ENCODE measurements at regions of chr7 and their contacts with region 1.

Region 1: GRCh38 chr7:151017953-151018420 is 6.3 kb downstream of the ATG9B start:
- DNase-seq: peak; percentile 69 to 88 (median 79)
- ATAC-seq: peak; percentile 50
- H3K4me3 ChIP-seq: peak overlapping the region; percentile 52
- H3K4me3 Mint-ChIP-seq: peak overlapping the region; percentile 79
- H3K27ac ChIP-seq: peak overlapping the region; percentile 1 to 41
- H3K27ac Mint-ChIP-seq: peak overlapping the region; percentile 83
- H3K4me1 ChIP-seq: peaks cover 66% of the 10 kb centered on the region
- H3K4me1 Mint-ChIP-seq: peaks cover 61% of the 10 kb centered on the region
- H3K27me3 ChIP-seq: peaks cover 4 to 7% of the 10 kb centered on the region in 2 experiments
- H3K27me3 Mint-ChIP-seq: peaks cover 10% of the 10 kb centered on the region
- CTCF ChIP-seq: peak; percentile 98

Region 2: GRCh38 chr7:150553163-150553562 is 464.8 kb before region 1 on chr7:
- CTCF ChIA-PET with region 1: no interaction called
- POLR2A ChIA-PET with region 1: no interaction called
- intact Hi-C with region 1: no loop called
- DNase-seq: no peak
- ATAC-seq: no peak
- H3K4me3 ChIP-seq: no peak overlapping the region
- H3K4me3 Mint-ChIP-seq: peak overlapping the region; percentile 3
- H3K27ac ChIP-seq: peak overlapping the region in 1 of 2 donors; percentile 57
- H3K27ac Mint-ChIP-seq: peak overlapping the region; percentile 98
- H3K4me1 ChIP-seq: peaks cover 23% of the 10 kb centered on the region
- H3K4me1 Mint-ChIP-seq: peaks cover 70% of the 10 kb centered on the region
- H3K27me3 ChIP-seq: no peaks in the 10 kb centered on the region
- H3K27me3 Mint-ChIP-seq: no peaks in the 10 kb centered on the region
- CTCF ChIP-seq: no peak

Region 3: GRCh38 chr7:150787321-150788281 is 230.4 kb before region 1 on chr7:
- CTCF ChIA-PET with region 1: no interaction called
- POLR2A ChIA-PET with region 1: no interaction called
- intact Hi-C with region 1: no loop called
- DNase-seq: peak in 3 of 14 experiments; percentile 16 to 56 (median 51)
- ATAC-seq: no peak
- H3K4me3 ChIP-seq: no peak overlapping the region
- H3K4me3 Mint-ChIP-seq: no peak overlapping the region
- H3K27ac ChIP-seq: no peak overlapping the region
- H3K27ac Mint-ChIP-seq: no peak overlapping the region
- H3K4me1 ChIP-seq: no peaks in the 10 kb centered on the region
- H3K4me1 Mint-ChIP-seq: no peaks in the 10 kb centered on the region
- H3K27me3 ChIP-seq: peaks cover 0 to 3% of the 10 kb centered on the region in 2 experiments
- H3K27me3 Mint-ChIP-seq: peaks cover 13% of the 10 kb centered on the region
- CTCF ChIP-seq: no peak

Region 4: DNA sequence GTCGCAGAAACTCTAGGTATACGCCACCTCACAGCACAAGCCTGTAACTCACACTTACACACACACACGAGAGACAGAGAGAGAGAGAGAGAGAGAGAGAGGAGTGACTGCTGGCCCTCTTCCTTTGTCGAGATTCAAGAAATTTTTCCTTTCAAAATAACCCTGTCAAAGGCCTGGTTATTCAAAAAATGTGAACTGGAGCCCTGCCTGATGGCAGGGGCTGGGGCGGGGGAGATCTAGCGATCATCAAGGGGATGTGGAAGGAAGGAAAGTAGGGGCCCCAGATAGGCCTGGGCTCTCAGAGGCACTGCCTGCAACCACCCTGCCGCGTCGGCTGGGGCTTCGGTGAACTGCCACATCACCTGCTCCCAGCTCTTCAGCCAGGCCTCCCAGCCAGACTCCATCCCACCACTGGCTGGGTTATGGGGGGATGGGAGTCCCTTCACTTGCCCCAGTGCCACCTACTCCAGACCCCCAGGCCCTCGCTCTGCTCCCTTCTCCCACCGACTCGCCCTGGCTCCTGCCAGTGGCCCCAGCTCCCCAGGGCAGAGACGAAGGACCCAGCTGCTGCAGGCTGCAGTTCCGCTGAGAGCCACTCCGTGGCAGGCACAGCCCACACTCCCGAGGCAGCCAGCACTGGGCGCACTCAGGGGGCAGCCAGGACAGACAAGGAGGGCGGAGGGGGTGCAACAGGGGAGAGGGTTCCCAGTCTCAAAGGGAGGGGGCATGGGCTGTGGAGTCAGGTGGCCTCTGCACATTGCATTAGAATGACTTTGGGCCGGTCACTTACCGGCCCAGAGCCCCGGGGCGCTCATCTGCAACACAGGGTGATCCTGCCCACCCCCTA is 55.2 kb before region 1 on chr7:
- CTCF ChIA-PET with region 1: interaction called, 15 read pairs
- POLR2A ChIA-PET with region 1: interaction called, 9 read pairs
- intact Hi-C with region 1: loop called (anchors 1 kb)
- DNase-seq: peak; percentile 41 to 81 (median 57)
- ATAC-seq: peak; percentile 90
- H3K4me3 ChIP-seq: no peak overlapping the region
- H3K4me3 Mint-ChIP-seq: no peak overlapping the region
- H3K27ac ChIP-seq: no peak overlapping the region
- H3K27ac Mint-ChIP-seq: no peak overlapping the region
- H3K4me1 ChIP-seq: peaks cover 22% of the 10 kb centered on the region
- H3K4me1 Mint-ChIP-seq: peaks cover 27% of the 10 kb centered on the region
- H3K27me3 ChIP-seq: peaks cover 11 to 15% of the 10 kb centered on the region in 2 experiments
- H3K27me3 Mint-ChIP-seq: peaks cover 28% of the 10 kb centered on the region
- CTCF ChIP-seq: peak; percentile 95

Region 5: DNA sequence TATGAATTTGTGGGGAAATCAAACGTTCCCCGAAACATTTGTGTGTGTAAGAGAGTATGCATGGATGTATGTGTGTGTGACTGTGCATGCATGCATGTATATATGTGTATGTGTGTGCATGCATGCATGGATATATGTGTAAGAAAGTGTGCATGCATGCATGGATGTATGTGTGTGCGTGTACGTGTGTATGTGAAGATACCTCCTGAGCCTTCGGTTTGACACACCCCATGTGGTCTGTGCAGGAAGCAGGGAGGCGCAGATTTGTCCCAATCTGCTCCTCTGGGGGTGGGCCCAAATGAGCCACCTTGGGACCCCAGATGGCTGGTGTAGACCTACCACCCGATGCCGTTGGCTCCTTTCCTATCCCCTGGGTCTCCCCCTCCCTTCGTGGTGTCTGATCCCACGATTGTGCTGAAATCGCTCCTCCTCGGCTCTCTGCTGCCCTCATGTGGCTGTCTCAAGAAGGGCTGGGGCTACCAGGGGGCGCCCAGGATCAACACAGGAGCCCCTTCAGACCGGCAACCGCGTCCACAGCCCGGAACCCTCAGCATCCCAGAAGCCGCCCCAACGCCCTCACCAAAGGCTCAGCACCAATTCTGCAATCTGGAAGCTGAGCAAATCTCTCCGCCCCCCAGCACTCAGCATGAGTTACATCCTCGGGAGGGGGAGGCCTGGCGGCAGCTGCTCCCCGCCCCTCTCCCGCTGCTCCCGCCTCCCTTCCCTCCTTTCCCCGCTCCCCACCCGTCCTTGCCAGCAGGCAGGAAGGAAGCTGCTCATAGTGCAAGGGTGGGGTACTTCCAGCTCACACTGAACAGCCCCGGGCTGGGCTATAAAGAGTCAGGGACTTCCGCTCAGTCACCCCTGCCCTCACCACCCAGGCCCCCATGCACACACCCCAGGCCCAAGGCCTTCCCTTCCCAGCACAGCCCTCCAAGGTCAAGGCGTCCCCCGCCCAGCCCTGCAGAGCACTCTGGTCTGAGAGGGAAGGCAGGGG is 29.5 kb before region 1 on chr7:
- CTCF ChIA-PET with region 1: interaction called, 10 read pairs
- POLR2A ChIA-PET with region 1: interaction called, 19 read pairs
- intact Hi-C with region 1: loop called in 1 of 2 experiments (anchors 1 kb)
- DNase-seq: peak; percentile 46 to 83 (median 64)
- ATAC-seq: peak; percentile 76
- H3K4me3 ChIP-seq: peak overlapping the region; percentile 28
- H3K4me3 Mint-ChIP-seq: peak overlapping the region; percentile 63
- H3K27ac ChIP-seq: peak overlapping the region in 1 of 2 donors; percentile 33
- H3K27ac Mint-ChIP-seq: no peak overlapping the region
- H3K4me1 ChIP-seq: peaks cover 42% of the 10 kb centered on the region
- H3K4me1 Mint-ChIP-seq: peaks cover 38% of the 10 kb centered on the region
- H3K27me3 ChIP-seq: no peaks in the 10 kb centered on the region
- H3K27me3 Mint-ChIP-seq: peaks cover 4% of the 10 kb centered on the region
- CTCF ChIP-seq: peak; percentile 90

Region 6: GRCh38 chr7:151028131-151028947 is 10.4 kb after region 1 on chr7 and contains the start of gene ABCB8:
- CTCF ChIA-PET with region 1: interaction called, 39 read pairs
- POLR2A ChIA-PET with region 1: interaction called, 77 read pairs
- intact Hi-C with region 1: loop called (anchors 1 to 2 kb)
- DNase-seq: peak; percentile 95 to 100 (median 97)
- ATAC-seq: peak; percentile 90
- H3K4me3 ChIP-seq: peak within 1 kb of the TSS; percentile 74
- H3K4me3 Mint-ChIP-seq: peak within 1 kb of the TSS; percentile 96
- H3K27ac ChIP-seq: peak within 1 kb of the TSS; percentile 80 to 96
- H3K27ac Mint-ChIP-seq: peak within 1 kb of the TSS; percentile 98
- H3K4me1 ChIP-seq: peaks cover 22% of the 10 kb centered on the region
- H3K4me1 Mint-ChIP-seq: peaks cover 41% of the 10 kb centered on the region
- H3K27me3 ChIP-seq: no peaks in the 10 kb centered on the region
- H3K27me3 Mint-ChIP-seq: no peaks in the 10 kb centered on the region
- CTCF ChIP-seq: peak; percentile 63
- total RNA-seq, gene ABCB8: 57.0 to 62.2 TPM

Region 7: GRCh38 chr7:151110941-151111645 is 93.1 kb after region 1 on chr7:
- CTCF ChIA-PET with region 1: no interaction called
- POLR2A ChIA-PET with region 1: interaction called, 3 read pairs
- intact Hi-C with region 1: loop called (anchors 5 kb)
- DNase-seq: peak; percentile 60 to 85 (median 72)
- ATAC-seq: peak; percentile 75
- H3K4me3 ChIP-seq: no peak overlapping the region
- H3K4me3 Mint-ChIP-seq: no peak overlapping the region
- H3K27ac ChIP-seq: no peak overlapping the region
- H3K27ac Mint-ChIP-seq: no peak overlapping the region
- H3K4me1 ChIP-seq: peaks cover 20% of the 10 kb centered on the region
- H3K4me1 Mint-ChIP-seq: peaks cover 9% of the 10 kb centered on the region
- H3K27me3 ChIP-seq: peaks cover 5 to 10% of the 10 kb centered on the region in 2 experiments
- H3K27me3 Mint-ChIP-seq: peaks cover 22% of the 10 kb centered on the region
- CTCF ChIP-seq: peak; percentile 80